Esophagus squamous epithelium (tissue), 5 donors: ENCODE measurements at regions of chr3 and their contacts with region 1.

Region 1: DNA sequence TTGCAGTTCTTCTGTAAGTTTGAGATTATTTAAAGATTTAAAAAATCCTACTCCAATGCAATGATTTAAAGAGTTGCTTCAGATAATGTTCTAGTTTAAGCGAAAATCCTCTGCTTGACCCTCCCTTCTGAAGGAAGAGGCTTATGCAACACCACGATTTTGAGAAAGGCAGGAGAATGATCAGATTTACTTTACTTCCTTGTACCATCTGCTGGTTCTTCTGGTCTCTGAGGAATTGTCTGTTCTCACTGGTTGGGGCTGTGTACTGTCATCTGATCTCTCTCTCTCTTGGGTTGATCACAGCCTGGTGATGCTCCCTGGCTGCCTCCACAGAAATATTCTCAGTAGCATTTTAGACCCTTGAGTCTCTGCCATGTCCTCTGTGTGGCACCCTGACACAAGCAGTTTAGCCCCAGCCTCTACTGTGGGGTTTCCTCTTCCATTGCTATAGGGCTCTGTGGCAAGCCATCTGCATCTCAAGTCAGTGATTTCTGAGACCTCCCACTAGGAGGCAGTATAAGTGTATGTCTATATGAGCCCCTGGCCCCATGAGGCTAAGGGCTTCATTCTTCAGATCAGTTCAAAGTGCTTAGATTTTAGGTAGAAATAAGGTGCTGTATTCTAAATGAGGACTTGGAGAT is 50.8 kb upstream of the PLAAT1 start:
- DNase-seq: no peak
- H3K4me3 ChIP-seq: no peak overlapping the region
- H3K27ac ChIP-seq: no peak overlapping the region
- H3K4me1 ChIP-seq: no peaks in the 10 kb centered on the region
- H3K27me3 ChIP-seq: peaks cover 0 to 8% (median 0%) of the 10 kb centered on the region in 4 donors
- CTCF ChIP-seq: peak in 4 of 6 experiments; percentile 38 to 64 (median 44)
- POLR2A ChIP-seq: no peak

Region 2: GRCh38 chr3:193095366-193095765 is 94.9 kb before region 1 on chr3:
- intact Hi-C with region 1: no loop called
- DNase-seq: no peak
- H3K4me3 ChIP-seq: no peak overlapping the region
- H3K27ac ChIP-seq: no peak overlapping the region
- H3K4me1 ChIP-seq: no peaks in the 10 kb centered on the region
- H3K27me3 ChIP-seq: no peaks in the 10 kb centered on the region
- CTCF ChIP-seq: no peak
- POLR2A ChIP-seq: no peak

Region 3: GRCh38 chr3:193372783-193373182 is 182.5 kb after region 1 on chr3:
- intact Hi-C with region 1: no loop called
- DNase-seq: no peak
- H3K4me3 ChIP-seq: no peak overlapping the region
- H3K27ac ChIP-seq: no peak overlapping the region
- H3K4me1 ChIP-seq: no peaks in the 10 kb centered on the region
- H3K27me3 ChIP-seq: peaks cover 0 to 3% (median 0%) of the 10 kb centered on the region in 4 donors
- CTCF ChIP-seq: no peak
- POLR2A ChIP-seq: no peak

Region 4: GRCh38 chr3:193452338-193452737 is 262.1 kb after region 1 on chr3:
- intact Hi-C with region 1: loop called (anchors 10 kb)
- DNase-seq: no peak
- H3K4me3 ChIP-seq: no peak overlapping the region
- H3K27ac ChIP-seq: no peak overlapping the region
- H3K4me1 ChIP-seq: no peaks in the 10 kb centered on the region
- H3K27me3 ChIP-seq: no peaks in the 10 kb centered on the region
- CTCF ChIP-seq: peak in 2 of 6 experiments; percentile 8 to 30
- POLR2A ChIP-seq: no peak